AG04449 (cell line): ENCODE measurements at regions of chr9 and their contacts with region 1.

Region 1: GRCh38 chr9:125255781-125256391 is 5.7 kb upstream of the GAPVD1 start:
- DNase-seq: no peak
- H3K4me3 ChIP-seq: no peak overlapping the region
- CTCF ChIP-seq: peak; percentile 6

Region 2: DNA sequence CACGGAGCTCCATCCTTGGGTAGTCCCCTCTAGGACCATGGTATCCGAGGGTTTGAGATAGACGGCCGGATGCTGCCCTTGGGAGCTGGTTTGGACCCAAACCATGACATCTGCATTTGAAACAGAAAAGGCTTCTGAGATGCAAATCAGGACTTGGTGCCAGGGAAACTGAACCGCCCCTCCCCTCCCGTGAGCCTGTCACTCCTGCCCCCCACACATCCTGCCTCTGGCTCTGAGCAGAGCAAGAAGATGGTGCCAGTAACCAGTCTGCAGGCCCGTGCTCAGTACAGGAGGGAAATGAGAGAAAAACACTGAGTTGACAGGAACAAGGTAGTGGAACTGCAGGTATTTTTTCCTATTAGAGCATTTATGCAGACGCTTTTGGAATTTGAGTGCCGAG is 375.4 kb before region 1 on chr9:
- CTCF ChIA-PET with region 1: no interaction called
- POLR2A ChIA-PET with region 1: no interaction called
- DNase-seq: no peak
- H3K4me3 ChIP-seq: no peak overlapping the region
- CTCF ChIP-seq: no peak

Region 3: GRCh38 chr9:125241000-125241862 is 14.7 kb before region 1 on chr9 and contains the start of gene HSPA5:
- CTCF ChIA-PET with region 1: interaction called, 12 read pairs
- POLR2A ChIA-PET with region 1: interaction called, 24 read pairs
- DNase-seq: peak; percentile 98
- H3K4me3 ChIP-seq: peak within 1 kb of the TSS; percentile 99
- CTCF ChIP-seq: peak; percentile 31

Region 4: DNA sequence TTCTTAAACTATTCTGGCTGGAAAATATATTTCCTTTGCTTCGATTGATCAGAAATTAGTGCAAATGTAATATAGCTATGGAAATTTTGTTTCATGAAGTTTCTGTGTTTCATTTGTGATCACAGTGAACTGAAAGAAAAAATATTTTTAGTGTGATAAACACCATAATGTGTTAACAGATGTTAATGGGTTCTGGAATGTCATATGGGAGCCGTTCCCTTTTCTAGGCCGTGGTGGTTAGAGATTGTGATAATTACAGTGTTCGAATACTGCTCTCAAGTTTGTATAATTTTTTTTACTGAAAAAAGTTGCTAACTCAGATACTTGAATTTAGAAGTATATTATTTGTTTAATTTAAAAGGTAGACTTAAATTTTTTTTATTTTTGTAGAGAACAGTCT is 25.1 kb after region 1 on chr9:
- CTCF ChIA-PET with region 1: no interaction called
- POLR2A ChIA-PET with region 1: no interaction called
- DNase-seq: no peak
- H3K4me3 ChIP-seq: no peak overlapping the region
- CTCF ChIP-seq: no peak

Region 5: DNA sequence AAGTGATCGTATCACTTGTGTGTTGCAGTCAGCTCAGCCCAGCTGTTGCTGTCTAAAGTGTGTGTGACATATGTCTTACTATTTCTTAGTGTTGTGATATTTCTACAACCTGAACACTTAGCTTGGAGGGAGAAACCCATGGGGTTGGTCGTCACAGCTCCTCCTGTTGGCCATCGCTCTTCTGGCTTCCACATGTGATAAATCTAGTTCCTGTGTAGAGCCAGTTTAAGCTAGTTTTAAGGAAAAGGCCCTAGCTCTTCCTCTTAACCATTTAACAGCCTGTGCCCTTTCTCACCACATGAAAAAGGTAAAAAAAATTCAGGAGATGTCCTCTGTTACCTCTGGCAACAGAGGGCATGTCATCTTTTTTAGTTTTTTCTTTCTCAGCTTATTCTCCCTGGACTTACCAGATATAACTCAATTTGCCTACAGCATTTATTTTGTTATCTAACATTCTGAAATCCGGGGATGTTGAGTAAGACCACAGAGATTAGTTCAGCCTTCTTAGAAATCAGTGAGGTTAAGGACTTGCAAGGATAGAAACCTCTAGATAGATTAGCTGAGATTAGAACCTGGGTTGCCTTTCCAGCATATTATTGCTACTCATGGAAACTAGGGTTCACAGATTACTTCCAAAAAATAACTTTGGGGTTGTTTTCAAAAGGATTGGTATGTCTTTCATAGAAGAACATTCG is 106.1 kb after region 1 on chr9:
- CTCF ChIA-PET with region 1: interaction called, 10 read pairs
- POLR2A ChIA-PET with region 1: no interaction called
- DNase-seq: no peak
- H3K4me3 ChIP-seq: no peak overlapping the region
- CTCF ChIP-seq: peak; percentile 16

Region 6: GRCh38 chr9:125446581-125447094 is 190.8 kb after region 1 on chr9:
- CTCF ChIA-PET with region 1: no interaction called
- POLR2A ChIA-PET with region 1: no interaction called
- DNase-seq: no peak
- H3K4me3 ChIP-seq: no peak overlapping the region
- CTCF ChIP-seq: no peak